ENCODE measurements at regions of chr15 and their contacts with region 1.

Region 1: DNA sequence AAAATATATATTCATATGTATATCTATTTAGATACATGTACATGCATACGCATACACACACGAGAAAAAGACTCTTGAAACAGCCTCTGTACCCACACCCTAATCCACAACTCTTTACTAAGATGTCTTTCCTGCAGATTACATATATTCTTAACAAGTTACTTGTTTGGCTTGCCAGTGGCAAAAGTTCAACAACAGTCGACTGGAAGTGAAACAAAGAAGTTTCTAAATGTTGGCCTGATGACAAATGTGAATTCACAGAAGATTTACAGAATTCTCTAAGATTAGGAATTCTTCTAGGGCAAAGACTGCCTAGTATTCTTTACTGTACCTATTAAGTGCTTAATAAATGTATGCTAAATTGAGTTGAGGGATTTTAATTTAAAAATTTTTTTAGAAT is 116.8 kb downstream of the CDIN1 start:
- DNase-seq: no peak
- H3K4me3 ChIP-seq: no peak overlapping the region
- H3K27ac ChIP-seq: no peak overlapping the region
- H3K4me1 ChIP-seq: no peaks in the 10 kb centered on the region
- H3K27me3 ChIP-seq: no peaks in the 10 kb centered on the region
- CTCF ChIP-seq: no peak

Region 2: GRCh38 chr15:36737430-36737891 is 41.3 kb after region 1 on chr15:
- CTCF ChIA-PET with region 1: interaction called, 10 read pairs
- dilution Hi-C with region 1: no loop called
- in situ Hi-C with region 1: no loop called
- intact Hi-C with region 1: no loop called
- DNase-seq: peak; percentile 47
- H3K4me3 ChIP-seq: no peak overlapping the region
- H3K27ac ChIP-seq: no peak overlapping the region
- H3K4me1 ChIP-seq: peaks cover 7% of the 10 kb centered on the region
- H3K27me3 ChIP-seq: no peaks in the 10 kb centered on the region
- CTCF ChIP-seq: no peak

Region 3: GRCh38 chr15:36757189-36757814 is 61.1 kb after region 1 on chr15:
- CTCF ChIA-PET with region 1: no interaction called
- dilution Hi-C with region 1: no loop called
- in situ Hi-C with region 1: no loop called
- intact Hi-C with region 1: loop called (anchors 10 kb)
- DNase-seq: peak; percentile 85
- H3K4me3 ChIP-seq: no peak overlapping the region
- H3K27ac ChIP-seq: no peak overlapping the region
- H3K4me1 ChIP-seq: no peaks in the 10 kb centered on the region
- H3K27me3 ChIP-seq: no peaks in the 10 kb centered on the region
- CTCF ChIP-seq: no peak